PC-9 (cell line): ENCODE measurements at regions of chr18 and their contacts with region 1.

Region 1: GRCh38 chr18:48017635-48018034 is 87.2 kb upstream of the SMAD2 start:
- DNase-seq: no peak
- H3K4me3 ChIP-seq: no peak overlapping the region
- H3K27ac ChIP-seq: no peak overlapping the region
- H3K4me1 ChIP-seq: no peaks in the 10 kb centered on the region
- H3K27me3 ChIP-seq: peaks cover 10% of the 10 kb centered on the region; the same call in 1 of the 2 replicates
- CTCF ChIP-seq: no peak

Region 2: GRCh38 chr18:48385596-48385995 is 368.0 kb after region 1 on chr18:
- CTCF ChIA-PET with region 1: interaction called, 19 read pairs
- POLR2A ChIA-PET with region 1: no interaction called
- intact Hi-C with region 1: no loop called
- DNase-seq: no peak
- H3K4me3 ChIP-seq: no peak overlapping the region
- H3K27ac ChIP-seq: no peak overlapping the region
- H3K4me1 ChIP-seq: peaks cover 32% of the 10 kb centered on the region
- H3K27me3 ChIP-seq: no peaks in the 10 kb centered on the region
- CTCF ChIP-seq: no peak